Endothelial cell of umbilical vein (primary cell): ENCODE measurements at regions of chr9 and their contacts with region 1.

Region 1: DNA sequence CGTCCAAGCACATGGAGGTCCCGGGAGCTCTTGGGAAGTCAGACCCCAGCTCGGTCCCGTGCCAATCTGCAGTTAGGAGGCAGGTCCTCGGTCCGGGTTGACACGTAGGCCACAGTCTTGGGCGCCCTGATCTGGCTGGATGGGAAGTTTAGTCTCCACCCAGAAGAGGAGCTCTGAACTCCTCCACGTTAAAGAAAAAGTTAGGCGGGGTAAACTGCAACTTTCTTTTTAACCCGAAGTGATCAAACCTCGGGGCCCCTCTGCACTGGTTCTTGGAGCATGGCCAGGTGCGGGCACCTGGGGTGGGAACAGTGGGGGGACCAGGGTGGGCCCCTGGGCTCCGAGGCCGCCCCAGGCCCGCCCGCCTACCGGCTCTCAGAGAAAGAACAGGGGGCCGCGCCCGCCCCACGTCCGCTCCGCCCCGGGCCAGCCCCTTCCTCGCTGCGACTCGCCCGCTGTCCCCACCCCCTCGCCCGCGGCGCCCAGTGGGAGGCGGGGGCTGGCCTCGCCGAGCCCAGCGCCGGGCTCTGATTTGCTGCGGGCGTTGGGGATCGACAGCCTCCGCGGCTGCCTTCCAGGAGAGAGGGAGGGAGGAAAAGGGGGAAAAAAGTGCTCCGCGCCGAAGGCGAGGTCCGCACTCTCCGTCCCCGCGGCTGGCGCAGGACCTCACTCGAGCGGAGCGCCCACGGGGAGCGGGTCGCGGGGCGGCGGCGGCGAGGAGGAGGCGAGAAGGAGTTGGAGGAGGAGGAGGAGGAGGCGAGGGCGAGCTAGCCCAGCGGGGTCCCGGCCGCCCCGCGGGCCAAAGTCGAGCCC is at the start of gene COL5A1:
- DNase-seq: peak; percentile 93
- H3K4me3 ChIP-seq: peak within 1 kb of the TSS; percentile 80 to 83 (median 80)
- H3K27ac ChIP-seq: peak within 1 kb of the TSS; percentile 67
- H3K4me1 ChIP-seq: peaks cover 28% of the 10 kb centered on the region
- H3K27me3 ChIP-seq: no peaks in the 10 kb centered on the region
- CTCF ChIP-seq: peak in 1 of 2 donors; percentile 23
- POLR2A ChIP-seq: peak; percentile 79
- total RNA-seq, gene COL5A1: 164 and 175 TPM in 2 replicates

Region 2: GRCh38 chr9:134163353-134164196 is 477.8 kb before region 1 on chr9:
- CTCF ChIA-PET with region 1: interaction called, 3 read pairs
- POLR2A ChIA-PET with region 1: no interaction called
- dilution Hi-C with region 1: no loop called
- intact Hi-C with region 1: loop called (anchors 2 kb)
- DNase-seq: peak; percentile 62
- H3K4me3 ChIP-seq: peak overlapping the region; percentile 6 to 30 (median 25)
- H3K27ac ChIP-seq: peak overlapping the region; percentile 35
- H3K4me1 ChIP-seq: peaks cover 4% of the 10 kb centered on the region
- H3K27me3 ChIP-seq: no peaks in the 10 kb centered on the region
- CTCF ChIP-seq: peak; percentile 34 to 68
- POLR2A ChIP-seq: no peak

Region 3: GRCh38 chr9:134551650-134552348 is 89.6 kb before region 1 on chr9:
- CTCF ChIA-PET with region 1: interaction called, 6 read pairs
- POLR2A ChIA-PET with region 1: no interaction called
- dilution Hi-C with region 1: no loop called
- intact Hi-C with region 1: loop called (anchors 1 kb)
- DNase-seq: peak; percentile 73
- H3K4me3 ChIP-seq: no peak overlapping the region
- H3K27ac ChIP-seq: peak overlapping the region; percentile 91
- H3K4me1 ChIP-seq: peaks cover 21% of the 10 kb centered on the region
- H3K27me3 ChIP-seq: no peaks in the 10 kb centered on the region
- CTCF ChIP-seq: no peak
- POLR2A ChIP-seq: no peak

Region 4: GRCh38 chr9:134585746-134586706 is 55.4 kb before region 1 on chr9:
- CTCF ChIA-PET with region 1: no interaction called
- POLR2A ChIA-PET with region 1: no interaction called
- dilution Hi-C with region 1: no loop called
- intact Hi-C with region 1: no loop called
- DNase-seq: no peak
- H3K4me3 ChIP-seq: no peak overlapping the region
- H3K27ac ChIP-seq: no peak overlapping the region
- H3K4me1 ChIP-seq: no peaks in the 10 kb centered on the region
- H3K27me3 ChIP-seq: peaks cover 0 to 8% of the 10 kb centered on the region in 2 experiments
- CTCF ChIP-seq: no peak
- POLR2A ChIP-seq: no peak

Region 5: DNA sequence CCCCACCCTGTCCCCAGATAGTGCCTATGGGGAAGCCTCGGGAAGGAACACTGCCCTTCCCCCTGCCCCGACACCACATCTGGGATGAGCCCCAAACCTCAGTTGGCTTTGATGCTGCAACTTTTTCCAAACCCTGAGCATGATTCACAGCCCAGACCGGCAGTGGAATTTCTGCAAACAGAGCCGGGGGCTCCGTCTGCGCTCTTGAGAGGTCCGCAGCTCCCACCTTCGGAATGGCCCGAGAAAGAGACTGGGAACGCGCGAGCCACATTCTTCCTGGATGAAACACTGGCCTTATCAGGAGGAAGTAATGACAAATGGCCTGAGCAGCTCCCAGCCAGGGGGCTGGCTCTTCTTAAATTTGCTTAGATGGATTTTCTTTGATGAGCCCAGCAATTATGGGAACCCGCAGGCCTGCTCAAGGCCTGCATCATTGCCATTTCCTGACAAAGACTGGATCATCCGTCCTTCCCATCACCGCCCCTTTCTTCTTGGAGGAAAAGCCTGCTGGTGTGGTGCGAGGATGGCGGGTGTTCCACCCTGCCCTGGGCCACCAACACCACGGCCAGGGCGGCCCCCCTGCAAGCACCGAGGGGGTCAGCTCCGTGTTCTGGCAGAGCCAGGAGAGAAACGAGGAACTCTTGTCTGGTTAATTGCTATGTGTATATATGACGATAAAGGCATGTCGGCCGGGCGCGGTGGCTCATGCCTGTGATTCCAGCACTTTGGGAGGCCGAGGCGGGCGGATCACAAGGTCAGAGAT is 38.7 kb before region 1 on chr9:
- CTCF ChIA-PET with region 1: interaction called, 6 read pairs
- POLR2A ChIA-PET with region 1: no interaction called
- dilution Hi-C with region 1: no loop called
- intact Hi-C with region 1: loop called (anchors 1 kb)
- DNase-seq: peak; percentile 84
- H3K4me3 ChIP-seq: no peak overlapping the region
- H3K27ac ChIP-seq: peak overlapping the region; percentile 97
- H3K4me1 ChIP-seq: peaks cover 19% of the 10 kb centered on the region
- H3K27me3 ChIP-seq: no peaks in the 10 kb centered on the region
- CTCF ChIP-seq: no peak
- POLR2A ChIP-seq: peak; percentile 17

Region 6: GRCh38 chr9:134624827-134625181 is 16.6 kb before region 1 on chr9:
- CTCF ChIA-PET with region 1: interaction called, 7 read pairs
- POLR2A ChIA-PET with region 1: no interaction called
- dilution Hi-C with region 1: no loop called
- intact Hi-C with region 1: loop called (anchors 1 kb)
- DNase-seq: peak; percentile 42
- H3K4me3 ChIP-seq: no peak overlapping the region
- H3K27ac ChIP-seq: peak overlapping the region; percentile 60
- H3K4me1 ChIP-seq: peaks cover 29% of the 10 kb centered on the region
- H3K27me3 ChIP-seq: no peaks in the 10 kb centered on the region
- CTCF ChIP-seq: no peak
- POLR2A ChIP-seq: peak; percentile 31